Activated T-helper 2 cell treated with anti-CD3 and anti-CD28 coated beads, Interferon-gamma antibody, Interleukin-2, Interleukin-4, amounts not matched to agents 10 μg/mL and 5 μg/mL and 100 μg/mL, durations not matched to agents 14 hours and 24 hours and 36 hours (primary cell): ENCODE measurements at regions of chr10 and their contacts with region 1.

Region 1: GRCh38 chr10:99248824-99249223 is 13.2 kb upstream of the HPSE2 start:
- DNase-seq: no peak
- H3K4me3 Mint-ChIP-seq: no peak overlapping the region
- H3K27ac Mint-ChIP-seq: no peak overlapping the region
- H3K4me1 Mint-ChIP-seq: no peaks in the 10 kb centered on the region
- H3K27me3 Mint-ChIP-seq: peaks cover 4% of the 10 kb centered on the region

Region 2: DNA sequence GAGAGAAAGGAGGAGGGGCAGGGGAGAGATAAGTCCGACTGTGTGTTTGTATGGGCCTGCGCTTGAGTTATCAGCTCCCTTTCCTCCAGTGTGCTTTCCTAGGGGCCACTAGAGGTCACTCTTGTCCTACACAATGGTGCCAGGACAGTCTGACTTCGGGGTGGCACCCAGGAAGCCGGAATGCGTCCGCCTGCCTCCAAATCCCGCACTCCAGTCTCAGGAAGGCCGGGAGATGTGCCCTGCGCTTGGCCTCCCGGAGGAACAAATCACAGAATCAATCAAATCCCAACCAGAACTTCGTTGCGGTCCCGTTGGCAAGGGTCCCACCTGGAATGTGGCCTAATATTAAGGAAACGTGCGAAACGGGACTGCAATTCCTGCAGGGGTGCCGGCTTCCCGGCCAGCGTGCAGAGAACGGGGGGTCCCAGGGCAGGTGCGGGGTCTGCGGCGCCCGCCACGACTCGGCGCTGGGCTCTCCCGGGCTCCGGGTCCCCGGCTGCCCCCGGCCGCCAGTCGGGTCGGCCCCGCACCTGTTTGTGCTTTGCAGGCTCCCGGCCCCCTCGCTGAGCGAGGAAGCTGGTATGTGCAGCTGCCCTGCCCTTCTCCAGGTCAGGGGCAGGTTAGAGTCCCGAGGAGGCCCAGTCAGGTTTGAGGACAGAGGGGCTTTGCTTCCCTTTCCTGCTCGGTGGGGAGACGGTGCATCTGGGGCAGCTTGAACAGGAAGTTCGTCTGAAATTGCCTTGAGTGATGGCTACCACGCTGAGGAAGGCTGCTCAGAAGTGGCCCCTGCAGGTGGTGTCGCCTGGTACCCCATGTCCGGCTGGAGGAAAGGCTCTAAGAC is 781.1 kb before region 1 on chr10:
- intact Hi-C with region 1: loop called (anchors 1 kb)
- DNase-seq: peak; percentile 45
- H3K4me3 Mint-ChIP-seq: peak overlapping the region; percentile 85
- H3K27ac Mint-ChIP-seq: no peak overlapping the region
- H3K4me1 Mint-ChIP-seq: peaks cover 13% of the 10 kb centered on the region
- H3K27me3 Mint-ChIP-seq: peaks cover 39% of the 10 kb centered on the region

Region 3: GRCh38 chr10:98664331-98665042 is 584.3 kb before region 1 on chr10:
- intact Hi-C with region 1: loop called (anchors 5 kb)
- DNase-seq: peak; percentile 11
- H3K4me3 Mint-ChIP-seq: no peak overlapping the region
- H3K27ac Mint-ChIP-seq: no peak overlapping the region
- H3K4me1 Mint-ChIP-seq: no peaks in the 10 kb centered on the region
- H3K27me3 Mint-ChIP-seq: peaks cover 7% of the 10 kb centered on the region

Region 4: DNA sequence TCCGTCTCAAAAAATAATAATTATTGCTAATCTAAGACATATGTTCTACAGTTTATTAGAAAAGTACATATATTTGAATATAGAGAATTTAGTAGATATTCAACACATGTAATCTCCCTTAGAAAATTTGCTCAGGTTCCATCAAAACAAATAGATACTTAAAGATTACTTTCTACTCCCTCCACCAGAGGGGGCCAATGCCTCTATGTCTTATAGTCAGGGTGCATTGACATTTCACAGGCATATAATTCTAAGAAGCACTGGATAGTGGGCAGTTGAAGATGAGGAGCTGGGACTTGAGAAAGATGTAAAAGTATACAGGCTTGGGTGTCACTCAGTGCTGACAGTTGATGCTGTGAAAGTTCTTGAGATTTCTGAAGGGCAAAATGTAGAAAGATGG is 500.5 kb before region 1 on chr10:
- intact Hi-C with region 1: loop called (anchors 5 kb)
- DNase-seq: no peak
- H3K4me3 Mint-ChIP-seq: no peak overlapping the region
- H3K27ac Mint-ChIP-seq: no peak overlapping the region
- H3K4me1 Mint-ChIP-seq: no peaks in the 10 kb centered on the region
- H3K27me3 Mint-ChIP-seq: no peaks in the 10 kb centered on the region

Region 5: GRCh38 chr10:99279593-99280111 is 30.8 kb after region 1 on chr10:
- intact Hi-C with region 1: no loop called
- DNase-seq: no peak
- H3K4me3 Mint-ChIP-seq: no peak overlapping the region
- H3K27ac Mint-ChIP-seq: no peak overlapping the region
- H3K4me1 Mint-ChIP-seq: no peaks in the 10 kb centered on the region
- H3K27me3 Mint-ChIP-seq: peaks cover 8% of the 10 kb centered on the region